ENCODE measurements at regions of chr4 and their contacts with region 1.

Region 1: DNA sequence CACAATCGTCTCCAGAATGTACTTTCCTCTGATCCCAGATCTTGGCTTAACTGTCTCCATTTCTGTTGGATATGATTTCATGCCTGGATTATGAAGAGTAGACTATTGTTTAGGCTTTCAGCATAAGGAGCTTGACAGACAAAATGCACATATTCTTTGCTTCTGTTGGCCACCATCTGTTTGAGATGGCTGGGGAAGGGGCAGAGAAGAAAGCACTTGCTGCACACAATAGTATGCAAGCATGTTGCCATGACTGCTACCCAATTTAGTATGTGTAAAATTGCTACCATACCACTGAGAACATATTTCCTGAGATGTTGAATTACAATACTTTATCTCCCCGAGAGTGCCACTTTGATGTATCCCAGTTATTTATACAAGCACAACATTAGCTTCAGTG is 127.9 kb upstream of the BMPR1B start:
- DNase-seq: no peak
- H3K4me3 ChIP-seq: no peak overlapping the region
- H3K27me3 ChIP-seq: no peaks in the 10 kb centered on the region
- CTCF ChIP-seq: no peak

Region 2: DNA sequence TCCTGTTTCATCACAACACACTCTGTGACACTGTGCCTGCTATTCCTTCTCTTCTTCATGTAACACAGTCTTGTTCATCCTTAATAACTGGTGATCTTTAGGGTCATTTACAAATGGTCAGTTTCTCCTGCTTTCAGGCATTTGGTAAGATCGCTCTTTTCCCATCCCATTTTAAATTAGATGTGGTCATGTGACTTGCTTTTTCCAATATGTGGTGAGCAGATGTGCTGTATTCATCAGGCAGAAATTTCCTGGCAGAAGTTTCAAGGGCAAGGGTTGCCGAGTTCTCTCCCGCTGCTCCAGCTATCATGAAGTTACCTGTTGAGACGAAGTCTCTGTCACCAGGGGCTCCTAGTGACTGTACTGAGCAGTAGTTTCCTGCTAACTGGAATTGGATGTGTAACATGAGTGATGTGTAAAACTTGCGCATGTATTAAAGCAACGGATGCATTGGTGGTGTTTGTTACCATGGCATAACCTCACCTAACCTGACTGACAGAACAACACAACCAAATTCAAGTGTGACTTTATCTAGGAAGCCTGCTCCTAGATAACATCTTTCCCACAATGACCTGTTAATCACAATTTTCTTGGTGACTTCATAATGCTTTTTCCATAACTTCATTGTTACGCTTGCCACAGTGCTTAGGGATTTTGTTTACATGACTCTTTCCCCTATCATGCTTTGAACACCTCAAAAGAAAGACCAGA is 98.4 kb after region 1 on chr4:
- CTCF ChIA-PET with region 1: interaction called, 90 read pairs
- POLR2A ChIA-PET with region 1: no interaction called
- DNase-seq: no peak
- H3K4me3 ChIP-seq: no peak overlapping the region
- H3K27me3 ChIP-seq: no peaks in the 10 kb centered on the region; the same call in 1 of the 2 replicates
- CTCF ChIP-seq: no peak